Activated B cell treated with CpG ODN at 0.5 μM for 24 hours (primary cell): ENCODE measurements at regions of chr7 and their contacts with region 1.

Region 1: GRCh38 chr7:98168181-98168905 is 42.9 kb upstream of the BHLHA15 start:
- DNase-seq: peak; percentile 34
- ATAC-seq: peak; percentile 66
- H3K4me3 Mint-ChIP-seq: no peak overlapping the region
- H3K27ac Mint-ChIP-seq: no peak overlapping the region
- H3K4me1 Mint-ChIP-seq: peaks cover 10% of the 10 kb centered on the region
- H3K27me3 Mint-ChIP-seq: peaks cover 2% of the 10 kb centered on the region
- CTCF ChIP-seq: peak; percentile 56

Region 2: DNA sequence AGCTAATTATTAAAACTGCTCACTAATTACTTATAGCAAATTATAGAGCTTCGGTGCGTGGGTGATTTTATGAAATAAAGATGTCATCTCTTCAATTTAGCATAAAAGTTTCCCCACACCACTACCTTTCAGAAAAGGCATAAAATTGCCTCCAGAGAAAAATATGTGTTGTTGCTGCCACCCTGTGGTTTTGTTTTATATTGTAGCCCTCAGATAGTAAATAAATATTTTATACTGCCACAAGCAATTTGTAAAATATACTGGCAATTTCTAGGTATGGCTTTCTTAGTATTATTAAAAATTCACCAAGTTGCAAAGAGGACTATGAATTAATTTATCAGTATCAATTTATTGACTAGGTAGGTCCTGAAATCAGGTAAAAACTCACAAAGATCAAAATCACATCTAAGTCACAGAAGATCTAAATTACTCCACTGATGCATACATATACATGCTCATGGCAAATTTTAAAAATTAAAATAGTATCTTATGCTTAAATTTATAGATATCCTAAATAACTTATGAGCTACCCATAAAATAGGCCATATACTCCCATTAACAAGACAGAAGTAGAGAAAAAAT is 322.6 kb before region 1 on chr7:
- CTCF ChIA-PET with region 1: interaction called, 3 read pairs
- POLR2A ChIA-PET with region 1: no interaction called
- intact Hi-C with region 1: loop called (anchors 2 kb)
- DNase-seq: no peak
- ATAC-seq: no peak
- H3K4me3 Mint-ChIP-seq: no peak overlapping the region
- H3K27ac Mint-ChIP-seq: no peak overlapping the region
- H3K4me1 Mint-ChIP-seq: no peaks in the 10 kb centered on the region
- H3K27me3 Mint-ChIP-seq: no peaks in the 10 kb centered on the region
- CTCF ChIP-seq: no peak

Region 3: DNA sequence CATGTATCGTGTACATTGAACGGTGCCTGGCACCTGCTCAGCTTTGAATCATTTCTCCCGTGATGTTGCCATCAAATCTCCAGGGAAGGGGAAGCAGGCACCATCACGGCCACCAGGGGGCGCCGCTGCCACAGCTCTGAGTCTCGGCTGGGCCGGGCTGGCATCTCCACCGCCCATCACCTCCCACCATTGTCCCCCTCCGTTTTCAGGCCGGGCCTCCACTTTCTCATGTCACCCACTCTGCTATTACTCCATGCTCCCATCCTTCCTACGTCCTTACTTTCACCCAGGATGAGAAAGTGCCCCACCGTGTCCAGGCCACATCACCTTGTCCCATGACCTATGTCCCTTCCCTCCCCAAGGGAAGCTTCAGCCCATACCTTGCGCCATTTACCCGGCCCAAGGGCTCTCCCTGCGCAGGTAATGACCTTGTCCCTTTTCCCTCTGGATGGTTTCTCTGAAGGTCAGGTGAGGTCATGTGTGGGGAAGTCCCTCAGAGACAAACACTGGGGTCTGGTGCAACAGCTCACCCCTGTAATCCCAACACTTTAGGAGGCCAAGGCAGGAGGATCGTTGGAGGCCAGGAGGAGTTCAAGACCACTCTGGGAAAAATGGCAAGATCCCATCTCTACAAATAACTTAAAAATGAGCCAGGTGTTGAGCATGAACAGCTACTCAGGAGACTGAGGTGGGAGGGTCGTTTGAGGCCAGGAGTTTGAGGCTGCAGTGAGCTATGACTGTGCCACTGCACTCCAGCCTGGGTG is 146.6 kb before region 1 on chr7:
- CTCF ChIA-PET with region 1: interaction called, 248 read pairs
- POLR2A ChIA-PET with region 1: interaction called, 10 read pairs
- intact Hi-C with region 1: loop called (anchors 1 kb)
- DNase-seq: peak; percentile 76
- ATAC-seq: peak; percentile 81
- H3K4me3 Mint-ChIP-seq: no peak overlapping the region
- H3K27ac Mint-ChIP-seq: no peak overlapping the region
- H3K4me1 Mint-ChIP-seq: peaks cover 3% of the 10 kb centered on the region
- H3K27me3 Mint-ChIP-seq: peaks cover 20% of the 10 kb centered on the region
- CTCF ChIP-seq: peak; percentile 58

Region 4: GRCh38 chr7:98179608-98180007 is 11.3 kb after region 1 on chr7:
- CTCF ChIA-PET with region 1: interaction called, 13 read pairs
- POLR2A ChIA-PET with region 1: no interaction called
- intact Hi-C with region 1: no loop called
- DNase-seq: no peak
- ATAC-seq: no peak
- H3K4me3 Mint-ChIP-seq: no peak overlapping the region
- H3K27ac Mint-ChIP-seq: no peak overlapping the region
- H3K4me1 Mint-ChIP-seq: no peaks in the 10 kb centered on the region
- H3K27me3 Mint-ChIP-seq: no peaks in the 10 kb centered on the region
- CTCF ChIP-seq: no peak